Mammary epithelial cell (primary cell): ENCODE measurements at regions of chr15 and their contacts with region 1.

Region 1: DNA sequence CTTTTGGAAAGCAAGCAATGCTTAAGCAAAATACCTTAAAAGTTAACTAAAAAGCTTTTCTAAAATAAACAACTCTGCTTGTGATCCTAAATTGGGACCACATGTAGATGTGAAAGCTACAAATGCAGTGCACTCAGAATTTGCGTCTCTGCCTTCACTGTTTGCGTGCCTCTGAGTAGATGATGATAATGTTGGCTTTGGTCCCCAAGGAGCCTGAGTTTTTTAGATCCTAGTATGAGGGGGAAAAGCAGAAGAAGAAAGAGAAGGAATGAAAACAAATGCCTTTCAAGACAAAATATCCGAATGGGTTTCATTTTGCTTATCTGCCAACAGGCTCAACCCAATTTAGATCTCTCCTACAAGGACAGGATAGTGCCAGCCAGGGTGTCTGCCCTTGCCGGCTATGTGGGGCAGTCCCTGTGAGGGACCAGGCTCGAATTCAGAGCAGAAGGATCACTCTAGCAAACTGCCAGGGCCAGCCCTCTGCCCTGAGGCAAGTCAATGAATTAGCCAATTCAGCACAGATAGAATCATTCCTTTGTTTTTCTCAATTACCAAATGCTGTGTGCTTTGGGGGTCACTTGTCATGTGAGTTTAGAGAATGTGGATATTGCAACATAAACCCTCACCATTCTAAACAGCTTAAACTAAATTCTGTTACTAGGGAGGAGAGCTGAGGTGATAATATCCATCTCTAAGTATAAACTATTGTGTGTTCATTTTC is 28.5 kb downstream of the SCG5 start:
- DNase-seq: peak; percentile 69
- H3K4me3 ChIP-seq: no peak overlapping the region
- H3K27ac ChIP-seq: no peak overlapping the region
- H3K4me1 ChIP-seq: peaks cover 12% of the 10 kb centered on the region
- H3K27me3 ChIP-seq: no peaks in the 10 kb centered on the region
- CTCF ChIP-seq: no peak

Region 2: DNA sequence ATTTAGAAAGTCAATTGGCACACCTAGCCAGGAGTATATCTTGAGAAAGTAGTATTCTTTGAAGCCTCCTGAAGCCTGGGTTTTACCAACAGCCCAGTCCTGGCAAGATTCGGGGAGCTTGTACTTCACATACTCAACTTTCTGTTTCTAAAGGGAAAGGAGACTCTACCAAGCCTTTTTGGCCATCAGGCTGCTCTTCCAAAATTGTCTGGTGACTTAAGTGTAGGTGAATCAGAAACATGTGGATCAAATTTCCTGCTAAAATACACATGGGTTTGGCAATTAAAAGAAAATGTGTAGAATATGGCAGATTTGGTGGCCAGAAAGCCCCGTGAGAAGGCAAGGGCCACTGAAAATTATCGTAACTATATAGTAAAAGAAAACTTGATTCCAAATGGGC is 31.8 kb after region 1 on chr15:
- CTCF ChIA-PET with region 1: no interaction called
- dilution Hi-C with region 1: no loop called
- in situ Hi-C with region 1: no loop called
- intact Hi-C with region 1: loop called (anchors 1 kb)
- DNase-seq: no peak
- H3K4me3 ChIP-seq: no peak overlapping the region
- H3K27ac ChIP-seq: no peak overlapping the region
- H3K4me1 ChIP-seq: peaks cover 21% of the 10 kb centered on the region
- H3K27me3 ChIP-seq: no peaks in the 10 kb centered on the region
- CTCF ChIP-seq: no peak